Activated B cell treated with CpG ODN at 0.5 μM for 24 hours (primary cell): ENCODE measurements at regions of chr19 and their contacts with region 1.

Region 1: GRCh38 chr19:633068-633785 is at the start of gene POLRMT:
- DNase-seq: peak; percentile 93
- ATAC-seq: peak; percentile 89
- H3K4me3 Mint-ChIP-seq: peak within 1 kb of the TSS; percentile 95
- H3K27ac Mint-ChIP-seq: peak within 1 kb of the TSS; percentile 93
- H3K4me1 Mint-ChIP-seq: peaks cover 36% of the 10 kb centered on the region
- H3K27me3 Mint-ChIP-seq: no peaks in the 10 kb centered on the region
- CTCF ChIP-seq: no peak
- total RNA-seq, gene POLRMT: 54.7 and 58.2 TPM in 2 replicates

Region 2: GRCh38 chr19:389255-389934 is 243.8 kb before region 1 on chr19:
- CTCF ChIA-PET with region 1: no interaction called
- POLR2A ChIA-PET with region 1: no interaction called
- intact Hi-C with region 1: no loop called
- DNase-seq: no peak
- ATAC-seq: no peak
- H3K4me3 Mint-ChIP-seq: no peak overlapping the region
- H3K27ac Mint-ChIP-seq: no peak overlapping the region
- H3K4me1 Mint-ChIP-seq: no peaks in the 10 kb centered on the region
- H3K27me3 Mint-ChIP-seq: peaks cover 26% of the 10 kb centered on the region
- CTCF ChIP-seq: no peak

Region 3: DNA sequence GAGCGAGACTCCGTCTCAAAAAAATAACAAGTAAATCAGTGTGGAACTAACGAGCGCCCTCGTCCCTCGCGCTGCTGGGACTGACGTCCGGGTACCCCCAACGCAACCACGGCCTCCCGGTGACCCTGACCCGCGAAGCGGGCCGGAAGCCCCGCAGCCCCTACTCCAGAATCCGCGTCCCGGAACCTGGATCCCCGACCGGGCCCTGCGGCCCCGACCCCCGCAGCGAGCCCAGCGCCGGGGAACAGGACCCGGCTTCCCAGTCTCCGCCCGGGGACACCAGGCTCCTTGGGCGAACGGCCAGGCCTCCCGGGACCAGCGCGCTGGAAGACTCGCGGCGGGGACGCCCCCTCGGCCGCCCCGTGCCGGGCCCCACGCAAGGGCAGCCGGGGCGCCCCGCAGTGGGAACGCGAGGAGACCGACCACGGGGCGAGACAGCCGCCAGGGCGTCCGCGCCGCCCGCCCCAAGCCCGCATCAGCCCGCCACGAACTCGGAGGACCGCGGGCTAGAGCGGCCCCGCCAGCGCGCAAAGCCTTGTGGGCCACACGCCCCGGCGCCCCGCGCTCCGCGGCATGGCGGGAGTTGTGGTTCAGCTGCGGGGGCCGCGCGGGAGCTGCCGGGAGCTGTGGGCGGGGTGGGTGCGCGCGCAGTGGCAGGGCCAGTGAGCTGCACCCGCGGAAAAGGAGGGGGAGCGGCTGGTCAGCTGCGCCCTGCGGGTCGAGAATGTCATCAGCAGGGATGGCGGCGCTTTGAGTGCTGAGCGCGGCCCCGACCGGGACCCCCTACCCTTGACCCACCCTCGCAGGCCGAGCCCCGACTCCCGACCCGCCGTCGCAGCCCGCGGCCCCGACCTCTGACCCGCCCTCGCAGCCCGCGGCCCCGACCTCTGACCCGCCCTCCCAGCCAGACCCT is 144.5 kb before region 1 on chr19:
- CTCF ChIA-PET with region 1: no interaction called
- POLR2A ChIA-PET with region 1: no interaction called
- intact Hi-C with region 1: no loop called
- DNase-seq: peak; percentile 96
- ATAC-seq: peak; percentile 94
- H3K4me3 Mint-ChIP-seq: peak overlapping the region; percentile 85
- H3K27ac Mint-ChIP-seq: peak overlapping the region; percentile 88
- H3K4me1 Mint-ChIP-seq: peaks cover 11% of the 10 kb centered on the region
- H3K27me3 Mint-ChIP-seq: peaks cover 10% of the 10 kb centered on the region
- CTCF ChIP-seq: no peak

Region 4: GRCh38 chr19:572140-572742 is 61.0 kb before region 1 on chr19 and contains the start of gene BSG:
- CTCF ChIA-PET with region 1: no interaction called
- POLR2A ChIA-PET with region 1: interaction called, 6 read pairs
- intact Hi-C with region 1: loop called (anchors 1 kb)
- DNase-seq: peak; percentile 98
- ATAC-seq: peak; percentile 82
- H3K4me3 Mint-ChIP-seq: peak within 1 kb of the TSS; percentile 97
- H3K27ac Mint-ChIP-seq: peak within 1 kb of the TSS; percentile 99
- H3K4me1 Mint-ChIP-seq: peaks cover 36% of the 10 kb centered on the region
- H3K27me3 Mint-ChIP-seq: no peaks in the 10 kb centered on the region
- CTCF ChIP-seq: no peak
- total RNA-seq, gene BSG: 150 and 152 TPM in 2 replicates

Region 5: DNA sequence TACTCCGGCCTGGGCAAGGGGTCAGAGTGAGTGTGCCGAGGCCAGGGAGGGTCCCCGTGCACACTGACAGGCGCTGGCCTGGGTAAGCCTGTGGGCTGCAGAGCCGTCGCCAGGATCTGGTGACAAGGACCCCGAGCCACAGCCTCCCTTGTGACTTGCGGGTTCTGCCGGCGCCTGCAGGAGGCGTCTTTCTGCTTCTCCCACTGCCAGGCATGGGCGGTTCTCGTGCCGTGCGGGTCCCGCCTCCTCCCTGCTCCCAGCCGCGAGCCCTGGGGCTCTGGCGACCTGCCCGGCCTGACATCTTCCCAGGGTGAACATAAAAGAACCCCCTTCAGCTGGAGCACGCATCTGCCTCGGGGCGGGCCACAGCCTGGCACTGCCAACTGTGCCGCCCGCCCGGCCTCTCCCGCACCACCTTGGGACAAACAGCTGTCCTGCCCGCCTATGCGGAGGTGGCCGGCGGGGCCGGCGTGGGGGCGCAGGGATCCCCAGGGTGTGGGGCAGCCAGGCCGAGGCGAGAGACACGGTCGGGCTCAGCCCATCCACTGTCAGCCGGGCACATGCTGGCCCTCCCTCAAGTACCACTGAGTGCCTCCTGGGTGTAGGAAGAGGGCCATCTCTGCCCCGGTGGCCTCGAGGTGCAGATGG is 45.0 kb before region 1 on chr19:
- CTCF ChIA-PET with region 1: interaction called, 3 read pairs
- POLR2A ChIA-PET with region 1: interaction called, 4 read pairs
- intact Hi-C with region 1: loop called (anchors 2 kb)
- DNase-seq: peak; percentile 38
- ATAC-seq: peak; percentile 41
- H3K4me3 Mint-ChIP-seq: no peak overlapping the region
- H3K27ac Mint-ChIP-seq: no peak overlapping the region
- H3K4me1 Mint-ChIP-seq: peaks cover 8% of the 10 kb centered on the region
- H3K27me3 Mint-ChIP-seq: peaks cover 8% of the 10 kb centered on the region
- CTCF ChIP-seq: no peak

Region 6: DNA sequence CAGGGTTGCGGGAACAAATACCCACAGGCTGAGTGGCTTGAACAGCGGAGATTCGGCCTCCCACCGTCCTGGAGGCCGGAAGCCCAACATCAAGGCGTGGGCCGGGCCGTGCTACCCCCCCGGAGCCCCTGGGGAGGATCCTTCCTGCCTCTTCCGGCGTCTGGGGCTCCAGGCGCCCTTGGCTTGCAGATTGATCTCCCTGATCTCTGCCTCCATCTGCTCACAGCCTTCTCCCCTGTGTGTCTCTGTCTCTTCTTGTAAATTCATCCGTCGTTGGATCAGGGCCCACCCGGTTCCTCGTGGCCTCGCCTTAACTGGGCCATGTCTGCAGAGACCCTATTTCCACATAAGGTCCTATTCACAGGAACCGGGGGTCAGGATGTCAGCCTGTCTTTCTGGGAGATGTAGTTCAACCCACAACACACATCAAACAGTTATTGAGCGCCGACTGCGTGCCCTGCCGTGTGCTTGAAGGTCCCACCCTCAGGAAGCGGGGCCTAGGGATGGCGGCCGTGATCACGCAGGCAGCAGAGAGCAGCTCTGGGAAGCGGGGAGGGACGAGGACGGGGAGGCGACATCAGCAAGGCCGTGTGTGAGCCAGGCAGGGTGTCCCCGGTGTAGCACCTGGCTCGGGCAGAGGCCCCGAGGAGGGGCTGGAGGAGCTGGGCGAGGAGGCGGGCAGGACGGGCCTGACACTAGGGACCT is 22.3 kb before region 1 on chr19:
- CTCF ChIA-PET with region 1: interaction called, 3 read pairs
- POLR2A ChIA-PET with region 1: no interaction called
- intact Hi-C with region 1: loop called (anchors 2 kb)
- DNase-seq: no peak
- ATAC-seq: peak; percentile 67
- H3K4me3 Mint-ChIP-seq: peak overlapping the region; percentile 75
- H3K27ac Mint-ChIP-seq: no peak overlapping the region
- H3K4me1 Mint-ChIP-seq: peaks cover 16% of the 10 kb centered on the region
- H3K27me3 Mint-ChIP-seq: peaks cover 3% of the 10 kb centered on the region
- CTCF ChIP-seq: no peak

Region 7: GRCh38 chr19:680287-681028 is 47.2 kb after region 1 on chr19:
- CTCF ChIA-PET with region 1: no interaction called
- POLR2A ChIA-PET with region 1: interaction called, 5 read pairs
- intact Hi-C with region 1: loop called (anchors 1 kb)
- DNase-seq: peak; percentile 95
- ATAC-seq: peak; percentile 80
- H3K4me3 Mint-ChIP-seq: peak overlapping the region; percentile 95
- H3K27ac Mint-ChIP-seq: peak overlapping the region; percentile 98
- H3K4me1 Mint-ChIP-seq: peaks cover 14% of the 10 kb centered on the region
- H3K27me3 Mint-ChIP-seq: peaks cover 4% of the 10 kb centered on the region
- CTCF ChIP-seq: no peak

Region 8: GRCh38 chr19:703651-704446 is 70.6 kb after region 1 on chr19:
- CTCF ChIA-PET with region 1: no interaction called
- POLR2A ChIA-PET with region 1: no interaction called
- intact Hi-C with region 1: no loop called
- DNase-seq: no peak
- ATAC-seq: peak; percentile 72
- H3K4me3 Mint-ChIP-seq: no peak overlapping the region
- H3K27ac Mint-ChIP-seq: no peak overlapping the region
- H3K4me1 Mint-ChIP-seq: peaks cover 9% of the 10 kb centered on the region
- H3K27me3 Mint-ChIP-seq: peaks cover 38% of the 10 kb centered on the region
- CTCF ChIP-seq: no peak